HepG2 (cell line): ENCODE measurements at regions of chr2 and their contacts with region 1.

Region 1: DNA sequence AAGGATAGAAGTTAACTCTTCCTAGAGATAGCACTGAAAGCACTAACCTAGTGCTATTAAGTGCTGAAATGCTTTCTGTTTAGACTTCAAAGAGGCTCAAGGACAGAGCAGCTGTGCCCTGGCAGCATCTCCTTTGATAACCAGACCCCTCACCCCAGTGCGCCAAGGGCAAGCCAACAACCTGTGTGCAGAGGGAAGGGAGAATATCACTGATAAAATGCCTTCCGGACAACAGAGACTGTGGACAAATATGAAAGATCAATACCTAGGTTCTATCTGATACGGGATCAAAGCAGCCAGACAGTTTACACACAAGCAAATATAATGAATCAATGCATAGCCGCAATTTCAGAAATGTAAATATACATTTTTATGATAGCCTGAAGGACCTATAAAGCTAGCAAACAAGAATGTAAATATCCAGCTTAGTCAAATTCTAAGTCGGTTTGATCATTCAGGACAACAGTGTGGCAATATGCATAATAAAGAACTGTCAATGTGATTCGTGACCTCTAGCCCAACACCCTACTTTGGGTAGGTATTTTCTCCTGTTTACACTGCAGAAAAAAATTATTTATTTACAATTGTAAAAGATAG is 91.8 kb upstream of the RFX8 start:
- DNase-seq: peak; percentile 100
- ATAC-seq: peak; percentile 97
- H3K4me3 ChIP-seq: peak overlapping the region in 1 of 3 experiments; percentile 19; a peak in 1 of 6 replicates
- H3K27ac ChIP-seq: peak overlapping the region; percentile 67
- H3K4me1 ChIP-seq: peaks cover 82% of the 10 kb centered on the region
- H3K27me3 ChIP-seq: no peaks in the 10 kb centered on the region
- CTCF ChIP-seq: peak; percentile 1; the same call in 1 of the 2 replicates
- EP300 ChIP-seq: peak; percentile 98 to 100
- POLR2A ChIP-seq: no peak
- RAD21 ChIP-seq: peak; percentile 32

Region 2: DNA sequence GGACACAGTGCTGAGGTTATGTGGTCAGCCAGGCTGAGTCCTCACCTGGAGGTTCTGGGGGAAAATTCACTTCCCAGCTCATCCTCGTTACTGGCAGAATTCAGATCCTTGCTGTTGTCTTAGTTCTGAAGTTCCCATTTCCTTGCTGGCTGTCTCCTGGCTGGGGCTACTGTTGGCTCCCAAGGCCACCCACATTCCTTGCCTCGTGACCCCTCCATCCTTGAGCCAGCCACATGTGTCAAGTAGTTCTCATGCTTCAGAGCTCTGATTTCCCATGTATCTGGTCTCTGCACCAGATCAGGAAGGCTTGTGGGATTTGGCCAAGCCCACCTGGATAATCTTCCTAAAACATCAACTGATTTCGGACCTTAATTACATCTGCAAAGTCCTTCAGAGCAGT is 53.7 kb before region 1 on chr2:
- CTCF ChIA-PET with region 1: no interaction called
- POLR2A ChIA-PET with region 1: interaction called, 4 read pairs
- in situ Hi-C with region 1: no loop called
- intact Hi-C with region 1: loop called (anchors 1 kb)
- DNase-seq: no peak
- ATAC-seq: no peak
- H3K4me3 ChIP-seq: no peak overlapping the region
- H3K27ac ChIP-seq: no peak overlapping the region
- H3K4me1 ChIP-seq: peaks cover 12% of the 10 kb centered on the region
- H3K27me3 ChIP-seq: peaks cover 2 to 27% of the 10 kb centered on the region in 2 experiments; a peak in 2 of 5 replicates
- CTCF ChIP-seq: no peak
- EP300 ChIP-seq: no peak
- POLR2A ChIP-seq: no peak
- RAD21 ChIP-seq: no peak

Region 3: DNA sequence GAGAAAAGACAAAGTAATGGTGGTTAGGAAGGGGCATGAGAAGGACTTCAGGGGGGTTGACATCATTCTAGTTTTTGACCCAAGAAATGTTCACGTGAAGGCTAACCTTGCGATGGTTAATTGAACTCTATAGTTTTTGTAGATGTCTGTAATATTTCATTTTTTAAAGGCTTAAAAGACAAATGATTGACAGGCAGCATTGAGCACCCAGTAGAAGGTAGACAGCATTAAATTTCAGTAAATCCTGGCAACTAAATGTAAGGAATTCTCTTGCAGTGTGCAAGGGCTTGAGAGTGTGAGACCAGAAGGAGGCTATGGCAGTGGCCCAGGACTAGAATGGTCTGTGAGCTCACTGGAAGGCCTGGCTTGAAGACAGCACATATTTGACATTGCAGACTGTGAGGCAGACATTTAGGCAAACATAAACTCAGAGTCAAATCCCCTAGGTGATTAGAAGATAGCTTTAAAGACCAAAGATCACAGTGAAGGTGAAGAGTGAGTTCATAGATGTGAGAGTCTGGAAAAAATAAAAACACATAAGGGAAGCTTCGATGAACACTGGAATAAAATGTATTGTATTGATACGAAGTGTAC is 30.7 kb after region 1 on chr2:
- CTCF ChIA-PET with region 1: no interaction called
- POLR2A ChIA-PET with region 1: interaction called, 8 read pairs
- in situ Hi-C with region 1: no loop called
- intact Hi-C with region 1: loop called (anchors 2 kb)
- DNase-seq: peak; percentile 92
- ATAC-seq: peak; percentile 99
- H3K4me3 ChIP-seq: no peak overlapping the region
- H3K27ac ChIP-seq: no peak overlapping the region
- H3K4me1 ChIP-seq: peaks cover 25% of the 10 kb centered on the region
- H3K27me3 ChIP-seq: no peaks in the 10 kb centered on the region
- CTCF ChIP-seq: no peak
- EP300 ChIP-seq: peak in 1 of 2 experiments; percentile 82; a peak in 2 of 4 replicates
- POLR2A ChIP-seq: no peak
- RAD21 ChIP-seq: 0 out of 2 replicates have a peak, but pooled peaks have one; percentile 21

Region 4: GRCh38 chr2:101688261-101688660 is 121.5 kb after region 1 on chr2:
- CTCF ChIA-PET with region 1: no interaction called
- POLR2A ChIA-PET with region 1: interaction called, 7 read pairs
- in situ Hi-C with region 1: no loop called
- intact Hi-C with region 1: loop called (anchors 2 kb)
- DNase-seq: no peak
- ATAC-seq: no peak
- H3K4me3 ChIP-seq: no peak overlapping the region
- H3K27ac ChIP-seq: no peak overlapping the region
- H3K4me1 ChIP-seq: peaks cover 58% of the 10 kb centered on the region
- H3K27me3 ChIP-seq: no peaks in the 10 kb centered on the region
- CTCF ChIP-seq: no peak
- EP300 ChIP-seq: no peak
- POLR2A ChIP-seq: no peak
- RAD21 ChIP-seq: no peak

Region 5: GRCh38 chr2:101770726-101771125 is 204.0 kb after region 1 on chr2:
- CTCF ChIA-PET with region 1: no interaction called
- POLR2A ChIA-PET with region 1: interaction called, 16 read pairs
- in situ Hi-C with region 1: no loop called
- intact Hi-C with region 1: loop called (anchors 1 kb)
- DNase-seq: peak; percentile 82
- ATAC-seq: peak; percentile 17
- H3K4me3 ChIP-seq: no peak overlapping the region; a peak in 1 of 6 replicates
- H3K27ac ChIP-seq: peak overlapping the region; percentile 65
- H3K4me1 ChIP-seq: peaks cover 100% of the 10 kb centered on the region
- H3K27me3 ChIP-seq: no peaks in the 10 kb centered on the region
- CTCF ChIP-seq: peak; percentile 80
- EP300 ChIP-seq: no peak
- POLR2A ChIP-seq: no peak
- RAD21 ChIP-seq: peak; percentile 58; the same call in 1 of the 2 replicates